Heart left ventricle (tissue), 16 donors: ENCODE measurements at regions of chr7 and their contacts with region 1.

Region 1: GRCh38 chr7:95781961-95782586 is 9.7 kb downstream of the DYNC1I1 start:
- DNase-seq: no peak
- ATAC-seq: no peak
- H3K4me3 ChIP-seq: no peak overlapping the region
- H3K27ac ChIP-seq: no peak overlapping the region
- H3K4me1 ChIP-seq: peaks cover 0 to 16% (median 0%) of the 10 kb centered on the region in 12 donors
- H3K27me3 ChIP-seq: no peaks in the 10 kb centered on the region
- CTCF ChIP-seq: no peak
- POLR2A ChIP-seq: no peak

Region 2: DNA sequence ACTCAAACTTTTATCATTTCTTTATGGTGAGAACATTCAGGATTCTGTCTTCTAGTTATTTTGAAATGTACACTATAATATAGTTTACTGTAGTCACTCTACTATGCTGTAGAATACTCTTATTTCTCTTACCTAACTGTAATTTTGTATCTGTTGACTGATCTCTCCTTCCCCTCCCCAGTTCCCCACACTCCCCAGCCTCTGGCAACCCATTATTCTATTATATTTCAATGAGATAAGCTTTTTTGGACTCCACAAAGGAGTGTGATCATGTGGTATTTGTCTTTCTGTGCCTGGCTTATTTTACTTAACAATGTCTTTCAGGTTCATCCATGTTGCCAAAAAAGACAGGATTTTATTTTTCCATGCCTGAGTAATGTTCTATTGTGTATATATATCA is 81.2 kb before region 1 on chr7:
- intact Hi-C with region 1: no loop called
- DNase-seq: no peak
- ATAC-seq: no peak
- H3K4me3 ChIP-seq: no peak overlapping the region
- H3K27ac ChIP-seq: no peak overlapping the region
- H3K4me1 ChIP-seq: no peaks in the 10 kb centered on the region
- H3K27me3 ChIP-seq: no peaks in the 10 kb centered on the region
- CTCF ChIP-seq: no peak
- POLR2A ChIP-seq: no peak

Region 3: GRCh38 chr7:95840953-95841950 is 59.2 kb after region 1 on chr7:
- intact Hi-C with region 1: loop called in 1 of 10 experiments (anchors 10 kb)
- DNase-seq: no peak
- ATAC-seq: no peak
- H3K4me3 ChIP-seq: no peak overlapping the region
- H3K27ac ChIP-seq: no peak overlapping the region
- H3K4me1 ChIP-seq: peaks cover 0 to 8% (median 0%) of the 10 kb centered on the region in 12 donors
- H3K27me3 ChIP-seq: no peaks in the 10 kb centered on the region
- CTCF ChIP-seq: peak in 1 of 12 donors; percentile 29
- POLR2A ChIP-seq: no peak